Sigmoid colon (tissue), 7 donors: ENCODE measurements at regions of chrX and their contacts with region 1.

Region 1: DNA sequence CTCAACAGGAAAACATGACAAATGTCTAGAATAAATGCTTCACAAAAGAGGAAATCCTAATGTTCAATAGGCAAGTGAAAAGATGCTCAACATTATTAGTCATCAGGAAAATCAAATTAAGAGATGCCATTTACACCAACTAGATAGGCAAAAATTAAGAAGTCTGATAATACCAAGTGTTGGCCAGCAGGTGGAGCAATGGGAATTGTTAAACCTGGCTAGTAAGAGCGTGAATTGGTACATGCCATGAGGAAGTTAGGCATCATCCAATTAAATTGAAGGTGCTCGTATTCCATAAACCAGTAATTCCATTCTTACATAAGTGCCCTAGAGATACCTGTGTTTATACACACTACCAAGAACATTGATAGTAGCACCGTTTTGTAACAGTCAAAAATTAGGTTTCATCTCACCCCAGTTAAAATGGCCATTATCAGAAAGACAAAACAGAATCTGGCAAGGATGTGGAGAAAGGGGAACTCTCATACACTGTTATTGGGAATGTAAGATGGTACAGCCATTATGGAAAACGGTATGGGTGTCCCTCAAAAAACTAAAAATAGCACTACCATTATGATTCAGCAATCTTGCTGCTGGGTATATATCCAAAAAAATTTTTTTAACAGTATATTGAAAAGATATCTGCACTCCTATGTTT is 14.0 kb upstream of the ZCCHC18 start:
- DNase-seq: peak; percentile 75
- H3K4me3 ChIP-seq: no peak overlapping the region
- H3K27ac ChIP-seq: no peak overlapping the region
- H3K4me1 ChIP-seq: no peaks in the 10 kb centered on the region
- H3K27me3 ChIP-seq: no peaks in the 10 kb centered on the region
- CTCF ChIP-seq: peak; percentile 32 to 52 (median 42)
- EP300 ChIP-seq: no peak
- POLR2A ChIP-seq: no peak

Region 2: GRCh38 chrX:104045642-104046041 is 52.6 kb before region 1 on chrX:
- intact Hi-C with region 1: no loop called
- DNase-seq: no peak
- H3K4me3 ChIP-seq: no peak overlapping the region
- H3K27ac ChIP-seq: no peak overlapping the region
- H3K4me1 ChIP-seq: no peaks in the 10 kb centered on the region
- H3K27me3 ChIP-seq: no peaks in the 10 kb centered on the region
- CTCF ChIP-seq: no peak
- EP300 ChIP-seq: no peak
- POLR2A ChIP-seq: no peak

Region 3: DNA sequence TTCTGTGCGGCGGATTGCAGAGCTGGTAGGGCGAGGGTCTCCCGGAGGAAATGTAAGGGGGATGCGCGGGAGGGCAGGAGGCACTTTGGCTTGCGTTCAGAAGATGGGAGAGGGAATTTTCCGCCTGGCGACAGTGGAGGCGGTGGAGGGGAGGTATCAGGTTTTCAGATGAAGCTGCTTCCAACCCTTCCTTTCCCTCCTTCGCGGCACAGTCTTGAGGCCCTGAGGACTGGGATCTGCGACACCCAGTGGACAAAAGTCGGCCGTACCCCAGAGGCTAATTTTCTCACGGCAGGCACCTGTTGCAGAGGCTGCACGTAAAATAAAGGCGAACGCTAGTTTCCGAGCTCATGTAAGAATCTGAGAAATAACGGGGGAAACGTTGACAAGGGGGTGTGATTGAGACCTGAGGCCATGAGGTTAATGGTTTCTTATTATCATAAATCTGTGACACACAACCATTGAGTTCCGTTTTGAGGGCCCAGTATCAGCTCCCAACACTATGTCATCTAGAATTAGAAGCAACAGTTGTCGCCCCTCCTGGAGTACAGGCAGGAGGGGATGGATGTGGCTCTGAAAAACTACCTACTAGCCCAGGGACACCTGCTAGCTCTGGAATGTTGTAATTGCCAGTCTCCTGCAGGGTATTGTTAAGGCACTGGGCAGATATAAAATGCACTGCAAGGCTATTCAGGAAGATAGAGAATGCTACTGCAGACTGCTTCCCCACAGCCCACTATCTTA is 15.1 kb after region 1 on chrX:
- intact Hi-C with region 1: loop called (anchors 2 kb)
- DNase-seq: peak; percentile 69
- H3K4me3 ChIP-seq: peak overlapping the region; percentile 40 to 61 (median 59)
- H3K27ac ChIP-seq: peak overlapping the region; percentile 77 to 83 (median 82)
- H3K4me1 ChIP-seq: peaks cover 0 to 8% (median 0%) of the 10 kb centered on the region in 4 donors
- H3K27me3 ChIP-seq: no peaks in the 10 kb centered on the region
- CTCF ChIP-seq: peak in 2 of 4 experiments; percentile 36 to 43
- EP300 ChIP-seq: no peak
- POLR2A ChIP-seq: no peak

Region 4: GRCh38 chrX:104136241-104137019 is 38.1 kb after region 1 on chrX:
- intact Hi-C with region 1: loop called (anchors 2 kb)
- DNase-seq: peak; percentile 89
- H3K4me3 ChIP-seq: peak overlapping the region; percentile 9 to 44 (median 42)
- H3K27ac ChIP-seq: peak overlapping the region; percentile 38 to 69 (median 63)
- H3K4me1 ChIP-seq: peaks cover 0 to 11% (median 7%) of the 10 kb centered on the region in 4 donors
- H3K27me3 ChIP-seq: no peaks in the 10 kb centered on the region
- CTCF ChIP-seq: peak; percentile 22 to 57 (median 44)
- EP300 ChIP-seq: no peak
- POLR2A ChIP-seq: no peak